K562 (cell line): ENCODE measurements at regions of chr1 and their contacts with region 1.

Region 1: DNA sequence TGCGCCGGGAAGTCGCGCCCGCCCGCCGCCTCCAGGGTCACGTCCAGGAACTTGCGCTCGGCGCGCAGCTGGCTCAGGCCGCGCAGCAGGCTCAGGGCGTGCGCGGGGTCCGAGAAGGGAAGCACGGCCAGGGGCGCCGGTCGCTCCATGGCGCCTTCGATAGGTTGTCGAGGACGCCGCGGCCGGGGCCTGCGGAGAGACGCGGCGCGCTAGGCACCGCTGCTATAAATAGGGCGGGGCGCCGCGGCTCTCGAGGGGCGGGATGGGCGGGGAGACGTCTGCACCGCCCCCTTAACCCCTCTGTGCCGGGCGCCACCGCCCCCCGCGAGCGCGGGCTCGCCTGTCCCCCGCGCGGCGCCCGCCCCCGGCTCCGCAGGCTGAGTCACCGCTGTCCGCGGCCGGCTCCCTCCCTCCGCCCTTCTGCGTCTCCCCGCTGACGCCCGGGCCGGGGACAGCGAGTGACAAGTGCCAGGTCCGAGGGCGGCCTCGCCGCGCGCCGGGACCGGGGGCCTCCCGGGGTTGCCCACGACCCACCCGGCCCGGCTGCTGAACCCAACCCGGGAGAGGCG is at the start of gene KLHL21:
- DNase-seq: peak; percentile 93 to 98 (median 96)
- ATAC-seq: peak; percentile 84
- H3K4me3 ChIP-seq: peak within 1 kb of the TSS; percentile 89
- H3K27ac ChIP-seq: peak within 1 kb of the TSS; percentile 99
- H3K4me1 ChIP-seq: peaks cover 33 to 56% of the 10 kb centered on the region in 2 experiments
- H3K27me3 ChIP-seq: no peaks in the 10 kb centered on the region
- CTCF ChIP-seq: no peak
- EP300 ChIP-seq: no peak
- POLR2A ChIP-seq: peak; percentile 82; the same call in 1 of the 2 replicates
- RAD21 ChIP-seq: no peak
- polyA plus RNA-seq, gene KLHL21: 2.1 to 2.2 TPM

Region 2: DNA sequence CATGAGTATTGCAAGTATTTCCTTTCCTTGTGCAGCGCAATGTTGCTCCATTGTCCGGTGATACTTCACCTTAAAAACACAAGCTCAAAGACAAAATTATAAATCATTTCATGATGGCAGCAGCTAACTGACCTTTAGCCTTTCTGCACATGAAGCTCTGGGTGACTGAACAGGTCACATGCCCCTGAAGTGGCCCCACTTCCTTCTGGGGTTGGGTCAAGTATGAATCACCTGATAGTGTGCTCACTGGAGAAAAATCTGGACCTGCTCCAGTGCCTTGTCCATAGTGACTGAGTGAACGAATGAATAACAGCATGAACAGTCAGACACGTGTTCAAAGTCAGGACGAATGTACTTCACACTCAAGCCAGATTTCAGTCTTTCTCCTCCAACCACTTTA is 1269.5 kb before region 1 on chr1:
- CTCF ChIA-PET with region 1: no interaction called
- POLR2A ChIA-PET with region 1: no interaction called
- in situ Hi-C with region 1: no loop called
- intact Hi-C with region 1: no loop called
- DNase-seq: no peak
- ATAC-seq: no peak
- H3K4me3 ChIP-seq: no peak overlapping the region
- H3K27ac ChIP-seq: no peak overlapping the region
- H3K4me1 ChIP-seq: no peaks in the 10 kb centered on the region
- H3K27me3 ChIP-seq: no peaks in the 10 kb centered on the region
- CTCF ChIP-seq: no peak
- EP300 ChIP-seq: no peak
- POLR2A ChIP-seq: no peak
- RAD21 ChIP-seq: no peak

Region 3: DNA sequence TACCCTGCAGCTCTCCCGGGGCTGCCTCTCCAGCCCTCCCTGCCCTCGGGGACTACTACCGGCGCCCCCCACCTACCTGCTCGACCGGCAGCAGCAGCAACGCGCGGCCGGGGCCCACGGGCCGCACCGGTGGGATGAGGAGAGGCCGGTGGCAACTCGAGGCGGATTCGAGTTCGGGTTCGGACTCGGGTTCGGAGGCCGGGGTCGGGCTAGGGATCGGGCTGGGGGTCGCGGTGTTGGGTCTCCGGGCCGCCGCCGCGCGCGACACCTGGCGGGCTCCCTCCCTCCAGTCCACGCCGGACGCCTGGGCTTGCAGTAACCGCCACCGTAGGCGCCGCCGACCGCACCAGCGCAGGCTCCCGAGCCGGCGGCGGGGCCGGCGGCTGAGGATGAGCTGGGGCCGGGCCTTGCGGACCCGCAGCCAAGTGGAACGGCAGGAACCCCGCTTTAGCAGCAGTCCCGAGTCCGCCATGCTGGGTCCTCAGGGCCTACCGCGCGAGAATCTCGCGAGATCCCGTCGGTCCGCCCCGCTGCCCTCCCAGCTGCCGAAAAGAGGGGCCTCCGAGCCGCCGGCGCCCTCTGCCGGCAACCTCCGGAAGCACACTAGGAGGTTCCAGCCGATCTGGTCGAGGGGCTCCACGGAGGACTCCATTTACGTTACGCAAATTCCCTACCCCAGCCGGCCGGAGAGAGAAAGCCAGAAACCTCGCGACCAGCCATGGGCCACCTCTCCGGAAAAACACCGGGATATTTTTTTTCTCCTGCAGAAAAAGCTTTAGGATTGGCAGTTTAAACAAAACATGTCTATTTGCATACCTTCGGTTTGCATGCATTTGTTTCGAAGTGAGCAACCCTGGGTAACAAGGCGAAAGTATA is 48.5 kb before region 1 on chr1 and contains the start of gene NOL9:
- CTCF ChIA-PET with region 1: interaction called, 3 read pairs
- POLR2A ChIA-PET with region 1: interaction called, 4 read pairs
- in situ Hi-C with region 1: no loop called
- intact Hi-C with region 1: loop called (anchors 1 kb)
- DNase-seq: peak; percentile 98 to 99 (median 98)
- ATAC-seq: peak; percentile 98
- H3K4me3 ChIP-seq: peak within 1 kb of the TSS; percentile 99
- H3K27ac ChIP-seq: peak within 1 kb of the TSS; percentile 85
- H3K4me1 ChIP-seq: peaks cover 14 to 24% of the 10 kb centered on the region in 2 experiments; a peak in 4 of 5 replicates
- H3K27me3 ChIP-seq: no peaks in the 10 kb centered on the region
- CTCF ChIP-seq: peak; percentile 96 to 98 (median 98)
- EP300 ChIP-seq: peak; percentile 51
- POLR2A ChIP-seq: peak; percentile 91
- RAD21 ChIP-seq: peak; percentile 70 to 76
- polyA plus RNA-seq, gene NOL9: 5.6 to 10.1 TPM

Region 4: GRCh38 chr1:6579374-6580118 is 23.2 kb before region 1 on chr1 and contains the start of gene ZBTB48:
- CTCF ChIA-PET with region 1: no interaction called
- POLR2A ChIA-PET with region 1: interaction called, 221 read pairs
- in situ Hi-C with region 1: no loop called
- intact Hi-C with region 1: loop called (anchors 2 kb)
- DNase-seq: peak; percentile 100
- ATAC-seq: peak; percentile 96
- H3K4me3 ChIP-seq: peak within 1 kb of the TSS; percentile 74
- H3K27ac ChIP-seq: peak within 1 kb of the TSS; percentile 73
- H3K4me1 ChIP-seq: peaks cover 35 to 57% of the 10 kb centered on the region in 2 experiments
- H3K27me3 ChIP-seq: no peaks in the 10 kb centered on the region
- CTCF ChIP-seq: no peak
- EP300 ChIP-seq: no peak
- POLR2A ChIP-seq: peak; percentile 94
- RAD21 ChIP-seq: no peak
- polyA plus RNA-seq, gene ZBTB48: 1.9 to 7.4 TPM

Region 5: GRCh38 chr1:6591222-6591621 is 11.5 kb before region 1 on chr1:
- CTCF ChIA-PET with region 1: no interaction called
- POLR2A ChIA-PET with region 1: interaction called, 221 read pairs
- in situ Hi-C with region 1: no loop called
- intact Hi-C with region 1: no loop called
- DNase-seq: no peak
- ATAC-seq: no peak
- H3K4me3 ChIP-seq: no peak overlapping the region
- H3K27ac ChIP-seq: no peak overlapping the region
- H3K4me1 ChIP-seq: peaks cover 0 to 39% of the 10 kb centered on the region in 2 experiments; a peak in 1 of 5 replicates
- H3K27me3 ChIP-seq: no peaks in the 10 kb centered on the region
- CTCF ChIP-seq: no peak
- EP300 ChIP-seq: no peak
- POLR2A ChIP-seq: no peak
- RAD21 ChIP-seq: no peak

Region 6: DNA sequence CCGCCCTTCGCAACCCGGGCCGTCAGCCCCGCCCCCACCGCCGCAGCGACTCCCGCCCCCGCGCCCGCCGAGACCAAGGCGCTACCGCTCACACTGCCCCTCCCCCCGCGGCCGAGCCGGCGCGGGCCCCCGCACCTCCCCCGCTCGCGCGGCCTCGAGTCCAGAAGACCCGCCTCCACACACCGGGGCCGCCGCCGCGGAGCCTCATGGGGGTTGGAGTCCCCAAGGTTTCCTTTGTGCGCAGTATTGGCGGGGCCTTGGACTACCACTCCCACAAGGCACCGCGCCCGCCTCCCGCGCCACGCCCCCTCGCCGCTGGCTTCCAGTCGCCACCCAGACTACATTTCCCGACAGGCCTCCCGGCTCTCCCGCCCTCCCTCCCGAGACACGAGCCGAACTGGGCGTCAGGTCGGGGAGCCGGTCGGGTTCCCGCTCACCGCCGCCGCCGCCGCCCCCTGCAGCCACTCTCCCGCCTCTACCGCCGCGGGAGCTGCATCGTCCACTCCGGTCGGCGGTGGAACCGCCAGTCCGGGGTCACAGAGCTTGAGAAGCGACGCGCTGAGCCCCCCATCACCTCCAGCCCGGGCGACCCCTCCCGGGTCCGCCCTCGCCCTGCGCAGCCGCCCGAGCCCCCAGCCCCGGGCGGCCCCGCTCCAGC is 10.7 kb after region 1 on chr1 and contains the start of gene PHF13:
- CTCF ChIA-PET with region 1: no interaction called
- POLR2A ChIA-PET with region 1: interaction called, 12 read pairs
- in situ Hi-C with region 1: no loop called
- intact Hi-C with region 1: loop called (anchors 1 kb)
- DNase-seq: peak; percentile 91 to 100 (median 96)
- ATAC-seq: peak; percentile 91
- H3K4me3 ChIP-seq: peak within 1 kb of the TSS; percentile 97
- H3K27ac ChIP-seq: peak within 1 kb of the TSS; percentile 94
- H3K4me1 ChIP-seq: peaks cover 21 to 47% of the 10 kb centered on the region in 2 experiments
- H3K27me3 ChIP-seq: no peaks in the 10 kb centered on the region
- CTCF ChIP-seq: no peak; a peak in 1 of 6 replicates
- EP300 ChIP-seq: no peak
- POLR2A ChIP-seq: peak; percentile 78
- RAD21 ChIP-seq: no peak
- polyA plus RNA-seq, gene PHF13: 1.8 TPM

Region 7: DNA sequence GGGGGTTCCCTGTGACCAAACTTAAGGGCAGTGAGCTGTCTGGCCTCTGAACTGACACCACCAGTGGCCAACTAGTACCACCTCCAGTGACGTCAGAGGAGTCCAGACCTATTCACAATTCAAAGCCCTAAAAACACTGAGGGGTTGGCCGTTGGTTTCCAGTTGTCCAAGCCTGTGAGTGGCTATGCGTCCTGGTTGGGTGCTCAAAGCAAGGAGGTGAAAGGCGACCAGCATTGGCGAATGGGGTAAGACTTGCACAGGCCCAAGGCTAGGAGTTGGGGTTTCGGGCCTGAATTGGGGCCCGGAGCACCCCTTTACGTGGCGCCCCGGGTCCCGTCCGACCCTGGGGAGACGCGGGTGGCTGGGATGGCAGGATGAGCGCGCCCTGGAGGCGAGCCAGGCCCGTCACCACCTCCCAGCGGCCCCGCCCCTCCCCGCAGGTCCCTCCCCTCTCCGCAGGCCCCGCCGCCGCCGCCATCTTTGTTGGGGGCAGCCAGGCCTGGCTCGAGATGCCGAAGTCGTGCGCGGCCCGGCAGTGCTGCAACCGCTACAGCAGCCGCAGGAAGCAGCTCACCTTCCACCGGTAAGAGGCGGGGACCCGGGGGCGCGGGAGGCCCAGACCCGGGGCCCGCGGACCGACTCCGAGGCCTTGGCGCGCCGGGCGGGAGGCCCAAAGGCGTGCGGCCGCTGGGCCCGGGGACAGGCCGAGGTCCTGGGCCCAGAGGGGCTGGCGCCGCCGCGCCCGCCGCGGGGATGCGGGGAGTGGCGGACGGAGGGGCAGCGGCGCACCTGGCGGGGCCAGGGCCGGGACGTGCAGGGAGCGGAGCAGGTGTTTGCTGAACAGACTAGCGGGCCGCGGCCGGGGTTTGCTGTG is 22.2 kb after region 1 on chr1 and contains the start of gene THAP3:
- CTCF ChIA-PET with region 1: no interaction called
- POLR2A ChIA-PET with region 1: interaction called, 15 read pairs
- in situ Hi-C with region 1: no loop called
- intact Hi-C with region 1: no loop called
- DNase-seq: peak; percentile 93 to 96 (median 94)
- ATAC-seq: peak; percentile 97
- H3K4me3 ChIP-seq: peak within 1 kb of the TSS; percentile 91
- H3K27ac ChIP-seq: peak within 1 kb of the TSS; percentile 74
- H3K4me1 ChIP-seq: peaks cover 12 to 47% of the 10 kb centered on the region in 2 experiments; a peak in 4 of 5 replicates
- H3K27me3 ChIP-seq: no peaks in the 10 kb centered on the region
- CTCF ChIP-seq: peak; percentile 20 to 29 (median 25); a peak in 3 of 6 replicates
- EP300 ChIP-seq: no peak
- POLR2A ChIP-seq: peak; percentile 79
- RAD21 ChIP-seq: peak in 1 of 2 experiments; percentile 30; a peak in 2 of 4 replicates
- polyA plus RNA-seq, gene THAP3: 1.9 to 7.0 TPM

Region 8: DNA sequence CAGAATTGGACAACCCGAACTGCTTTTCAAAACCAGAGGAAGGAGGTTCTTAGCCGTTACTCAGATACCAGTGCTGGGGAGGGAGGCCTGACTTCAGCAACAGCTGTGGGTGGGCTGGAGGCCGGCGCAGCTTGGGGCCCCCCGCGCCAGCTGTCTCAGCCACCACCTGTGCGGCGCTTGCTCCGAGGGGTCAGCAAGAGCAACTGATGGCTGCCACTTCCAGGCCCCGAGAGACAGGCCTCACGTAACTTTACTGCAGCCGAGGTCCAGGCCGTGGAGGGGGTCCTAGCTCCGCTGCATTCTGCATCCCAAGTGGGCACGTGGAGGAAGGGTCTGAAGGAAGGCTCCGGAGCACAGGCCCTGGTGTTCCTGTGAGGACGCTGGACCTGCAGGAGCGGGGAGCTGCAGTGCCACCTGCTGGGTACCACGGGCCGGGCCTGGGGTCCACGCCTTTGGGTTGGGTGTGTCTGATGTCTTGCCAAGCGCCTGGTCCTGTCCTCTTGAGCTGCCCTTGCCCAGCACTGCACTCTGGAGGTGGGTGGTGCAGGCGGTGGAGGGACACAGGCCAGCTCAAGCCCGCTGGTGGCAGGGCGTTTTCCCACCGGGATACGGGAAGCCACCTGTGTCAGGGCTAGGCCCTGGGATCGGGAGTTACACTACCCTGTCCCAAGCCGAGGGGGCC is 31.8 kb after region 1 on chr1:
- CTCF ChIA-PET with region 1: no interaction called
- POLR2A ChIA-PET with region 1: interaction called, 24 read pairs
- in situ Hi-C with region 1: no loop called
- intact Hi-C with region 1: no loop called
- DNase-seq: peak; percentile 53 to 68 (median 59)
- ATAC-seq: peak; percentile 91
- H3K4me3 ChIP-seq: no peak overlapping the region
- H3K27ac ChIP-seq: no peak overlapping the region
- H3K4me1 ChIP-seq: peaks cover 0 to 21% of the 10 kb centered on the region in 2 experiments; a peak in 1 of 5 replicates
- H3K27me3 ChIP-seq: no peaks in the 10 kb centered on the region
- CTCF ChIP-seq: peak; percentile 68 to 75 (median 72)
- EP300 ChIP-seq: no peak
- POLR2A ChIP-seq: peak; percentile 50; the same call in 1 of the 2 replicates
- RAD21 ChIP-seq: peak; percentile 25 to 71; a peak in 3 of 4 replicates

Region 9: DNA sequence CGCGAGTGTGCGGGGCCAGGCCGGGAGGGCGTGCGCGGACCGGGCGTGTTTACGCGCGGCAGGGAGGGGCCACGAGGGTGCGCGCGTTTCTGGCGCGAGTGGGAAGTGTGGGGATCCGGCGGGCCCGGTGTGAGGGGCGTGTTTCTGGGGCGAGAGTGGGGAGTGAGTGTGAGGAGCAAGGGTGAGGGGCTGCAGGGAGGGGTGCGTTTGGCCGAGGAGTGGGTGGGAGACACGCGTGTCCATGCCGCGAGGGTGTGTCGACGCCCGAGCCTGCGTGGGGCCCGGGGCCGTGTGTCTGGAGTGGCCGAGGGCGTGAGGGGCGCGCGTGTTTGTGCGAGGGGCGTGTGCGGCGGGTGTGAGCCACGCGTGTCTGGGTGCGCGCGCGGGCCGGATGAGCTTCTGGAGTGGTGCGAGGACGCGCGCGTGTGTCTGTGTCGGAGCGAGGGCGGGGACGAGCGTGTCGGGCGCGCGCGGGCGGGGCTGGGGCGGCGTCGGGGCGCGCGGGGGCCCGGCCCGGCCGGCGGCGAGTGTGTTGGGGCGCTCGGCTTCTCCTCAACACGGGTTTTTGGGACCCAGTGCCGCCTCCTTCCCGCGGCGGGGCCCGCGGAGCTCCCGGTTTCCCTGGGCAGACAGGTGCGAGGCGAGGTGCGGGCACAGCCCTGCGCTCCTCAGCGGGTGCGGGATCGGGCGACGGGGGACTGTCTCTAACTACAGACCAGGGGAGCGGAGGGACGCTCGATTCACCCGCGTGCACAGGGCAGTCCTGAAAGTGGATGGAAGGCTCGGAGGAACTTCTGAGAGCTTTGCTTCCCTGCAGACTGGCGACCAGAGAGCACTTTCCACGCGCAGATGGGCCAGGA is 1102.5 kb after region 1 on chr1:
- CTCF ChIA-PET with region 1: no interaction called
- POLR2A ChIA-PET with region 1: no interaction called
- in situ Hi-C with region 1: no loop called
- intact Hi-C with region 1: no loop called
- DNase-seq: peak in 1 of 4 experiments; percentile 27
- ATAC-seq: no peak
- H3K4me3 ChIP-seq: peak overlapping the region; percentile 16; the same call in 1 of the 2 replicates
- H3K27ac ChIP-seq: no peak overlapping the region
- H3K4me1 ChIP-seq: peaks cover 0 to 18% of the 10 kb centered on the region in 2 experiments; a peak in 2 of 5 replicates
- H3K27me3 ChIP-seq: peaks cover 28 to 45% of the 10 kb centered on the region in 2 experiments; a peak in 4 of 5 replicates
- CTCF ChIP-seq: no peak
- EP300 ChIP-seq: no peak
- POLR2A ChIP-seq: no peak
- RAD21 ChIP-seq: no peak